ENCODE measurements at regions of chr10 and their contacts with region 1.

Region 1: GRCh38 chr10:15433850-15434537 is 62.9 kb upstream of the FAM171A1 start:
- DNase-seq: peak in 1 of 2 donors; percentile 85
- H3K4me3 ChIP-seq: peak overlapping the region; percentile 22 to 46 (median 38)
- H3K27ac ChIP-seq: no peak overlapping the region
- H3K4me1 ChIP-seq: peaks cover 0 to 8% (median 4%) of the 10 kb centered on the region in 4 donors
- H3K27me3 ChIP-seq: no peaks in the 10 kb centered on the region
- CTCF ChIP-seq: peak in 5 of 7 experiments; percentile 51 to 76 (median 67)
- EP300 ChIP-seq: no peak
- POLR2A ChIP-seq: no peak

Region 2: GRCh38 chr10:15725603-15726002 is 291.6 kb after region 1 on chr10:
- intact Hi-C with region 1: loop called (anchors 10 kb)
- DNase-seq: peak in 1 of 2 donors; percentile 78
- H3K4me3 ChIP-seq: no peak overlapping the region
- H3K27ac ChIP-seq: no peak overlapping the region
- H3K4me1 ChIP-seq: peaks cover 0 to 14% (median 5%) of the 10 kb centered on the region in 4 donors
- H3K27me3 ChIP-seq: peaks cover 0 to 15% (median 0%) of the 10 kb centered on the region in 3 donors
- CTCF ChIP-seq: peak in 4 of 7 experiments; percentile 15 to 39 (median 32)
- EP300 ChIP-seq: no peak
- POLR2A ChIP-seq: no peak